Head of caudate nucleus (tissue), 42 donors: ENCODE measurements at regions of chr3 and their contacts with region 1.

Region 1: DNA sequence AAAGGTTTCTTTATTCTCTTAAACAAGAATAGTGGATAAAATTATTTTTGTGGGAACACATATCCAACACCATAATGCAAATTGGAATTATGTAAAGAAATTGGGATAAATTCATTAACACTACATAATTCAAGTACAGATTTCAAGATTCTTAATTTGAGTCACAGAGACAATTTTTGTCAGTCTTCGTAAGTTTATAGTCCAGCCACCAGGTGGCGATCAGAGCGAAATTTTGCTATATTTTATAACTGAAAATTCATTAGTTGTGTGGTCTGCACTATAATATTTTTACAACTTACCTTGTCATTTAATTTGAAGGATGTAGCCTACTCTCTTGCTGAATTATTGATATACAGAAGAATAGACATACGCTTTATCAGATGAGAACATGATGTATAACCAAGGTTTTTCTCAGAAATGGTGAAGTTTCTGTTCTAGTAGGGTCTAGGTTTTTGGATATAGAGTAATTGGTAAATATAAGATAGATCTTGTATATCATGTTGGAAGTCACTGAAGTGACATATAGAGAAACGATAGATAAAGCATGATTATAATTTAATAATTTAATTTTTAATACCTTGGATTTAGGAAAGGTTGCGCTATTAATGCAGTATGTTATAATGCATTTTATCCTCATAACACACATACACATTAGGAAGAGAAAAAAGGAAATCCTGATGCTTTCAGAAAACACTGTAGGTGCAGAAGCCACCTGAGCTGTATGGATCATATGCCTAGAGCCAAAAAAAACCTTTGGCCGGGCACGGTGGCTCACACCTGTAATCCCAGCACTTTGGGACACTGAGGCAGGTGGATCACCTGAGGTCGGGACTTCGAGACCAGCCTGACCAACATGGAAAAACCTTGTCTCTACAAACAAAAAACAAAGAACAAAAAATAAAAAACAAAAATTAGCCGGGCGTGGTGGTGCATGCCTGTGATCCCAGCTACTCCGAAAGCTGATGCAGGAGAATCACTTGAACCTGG is 31.7 kb downstream of the PLSCR4 start:
- DNase-seq: peak in 35 of 42 donors; percentile 5 to 75 (median 45)

Region 2: GRCh38 chr3:146326670-146327543 is 107.7 kb after region 1 on chr3:
- intact Hi-C with region 1: loop called (anchors 10 kb)
- DNase-seq: peak in 5 of 42 donors; percentile 6 to 22 (median 11)

Region 3: GRCh38 chr3:146577662-146578061 is 358.5 kb after region 1 on chr3:
- intact Hi-C with region 1: loop called (anchors 10 kb)
- DNase-seq: peak in 6 of 42 donors; percentile 16 to 40 (median 22)